CD4-positive, alpha-beta memory T cell (primary cell): ENCODE measurements at regions of chrX and their contacts with region 1.

Region 1: DNA sequence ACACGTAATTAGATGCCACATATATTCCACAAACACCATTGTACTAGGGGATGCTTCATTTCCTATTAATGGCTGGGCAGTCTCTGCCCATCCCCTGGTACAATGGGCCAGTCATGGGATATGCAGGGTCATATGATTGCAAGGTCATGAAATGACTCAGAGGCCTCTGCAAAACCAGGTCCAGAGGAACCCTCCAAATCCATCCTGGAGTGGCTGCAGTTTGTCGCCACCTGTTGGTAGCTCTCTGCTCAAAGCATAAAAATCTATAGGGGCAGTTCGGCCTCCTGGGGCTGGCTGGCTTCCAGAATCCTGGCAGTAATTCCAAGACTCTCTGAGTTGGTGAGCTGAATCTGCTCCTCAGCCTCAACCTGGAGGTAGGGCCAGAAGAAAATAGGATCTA is 22.9 kb upstream of the PUDP start:
- DNase-seq: peak in 4 of 5 donors; percentile 7 to 26 (median 19)
- H3K4me3 ChIP-seq: no peak overlapping the region
- H3K4me3 Mint-ChIP-seq: no peak overlapping the region
- H3K27ac ChIP-seq: no peak overlapping the region
- H3K27ac Mint-ChIP-seq: no peak overlapping the region
- H3K4me1 ChIP-seq: no peaks in the 10 kb centered on the region
- H3K4me1 Mint-ChIP-seq: no peaks in the 10 kb centered on the region
- H3K27me3 ChIP-seq: no peaks in the 10 kb centered on the region
- H3K27me3 Mint-ChIP-seq: no peaks in the 10 kb centered on the region

Region 2: DNA sequence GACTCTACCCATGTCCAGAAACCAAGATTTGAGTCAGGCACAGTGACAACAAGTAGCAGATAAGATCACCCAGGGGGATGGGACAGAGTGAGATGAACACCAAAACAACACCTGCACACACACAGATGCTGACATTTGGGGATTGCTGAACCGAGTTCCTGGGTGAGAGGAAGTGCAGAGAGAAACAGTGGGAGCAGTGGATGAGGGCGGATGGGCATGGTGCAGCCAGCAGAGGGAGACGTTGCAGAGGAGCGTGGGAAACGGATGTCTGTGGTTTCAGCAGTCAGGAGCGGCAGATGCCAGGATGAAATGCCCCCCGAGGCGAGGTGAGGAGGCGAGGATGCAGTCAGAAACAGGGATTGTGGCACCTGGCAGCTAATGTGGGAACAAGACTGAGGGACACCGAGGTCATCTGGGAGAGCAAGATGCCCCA is 101.9 kb before region 1 on chrX:
- CTCF ChIA-PET with region 1: interaction called, 3 read pairs
- POLR2A ChIA-PET with region 1: no interaction called
- intact Hi-C with region 1: loop called (anchors 10 kb)
- DNase-seq: peak in 2 of 5 donors; percentile 15 to 22
- H3K4me3 ChIP-seq: no peak overlapping the region
- H3K4me3 Mint-ChIP-seq: peak overlapping the region; percentile 18 to 70 (median 47)
- H3K27ac ChIP-seq: no peak overlapping the region
- H3K27ac Mint-ChIP-seq: peak overlapping the region in 5 of 7 donors; percentile 27 to 88 (median 78)
- H3K4me1 ChIP-seq: peaks cover 10% of the 10 kb centered on the region
- H3K4me1 Mint-ChIP-seq: peaks cover 21 to 40% (median 28%) of the 10 kb centered on the region in 4 donors
- H3K27me3 ChIP-seq: no peaks in the 10 kb centered on the region
- H3K27me3 Mint-ChIP-seq: no peaks in the 10 kb centered on the region

Region 3: GRCh38 chrX:7132335-7133049 is 38.4 kb before region 1 on chrX:
- CTCF ChIA-PET with region 1: interaction called, 10 read pairs
- POLR2A ChIA-PET with region 1: no interaction called
- intact Hi-C with region 1: loop called (anchors 1 kb)
- DNase-seq: peak in 3 of 5 donors; percentile 20 to 30 (median 28)
- H3K4me3 ChIP-seq: no peak overlapping the region
- H3K4me3 Mint-ChIP-seq: peak overlapping the region in 1 of 8 donors; percentile 2
- H3K27ac ChIP-seq: no peak overlapping the region
- H3K27ac Mint-ChIP-seq: peak overlapping the region in 4 of 7 donors; percentile 11 to 91 (median 62)
- H3K4me1 ChIP-seq: peaks cover 12% of the 10 kb centered on the region
- H3K4me1 Mint-ChIP-seq: peaks cover 22 to 54% (median 26%) of the 10 kb centered on the region in 4 donors
- H3K27me3 ChIP-seq: no peaks in the 10 kb centered on the region
- H3K27me3 Mint-ChIP-seq: no peaks in the 10 kb centered on the region